Transverse colon (tissue), 4 donors: ENCODE measurements at regions of chr4 and their contacts with region 1.

Region 1: DNA sequence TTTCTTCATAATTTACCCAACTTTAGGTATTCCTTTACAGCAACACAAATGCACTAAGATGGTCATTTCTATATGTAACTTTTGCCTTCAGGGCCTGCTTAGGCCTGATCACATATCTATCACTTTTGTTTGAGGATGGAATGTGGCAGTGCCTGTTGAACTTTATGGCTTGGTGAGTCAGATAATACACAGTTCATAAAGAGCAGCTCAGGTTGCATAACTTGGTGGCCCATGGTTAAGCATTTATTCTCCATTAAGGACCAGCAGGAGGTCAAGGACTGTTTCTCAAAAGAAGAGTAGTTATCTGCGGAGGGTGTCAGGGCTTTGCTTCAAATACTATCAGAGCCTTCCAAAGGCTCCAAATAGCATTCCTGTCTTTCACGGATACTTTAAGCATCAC is 124.1 kb upstream of the PDHA2 start:
- DNase-seq: no peak
- H3K4me3 ChIP-seq: no peak overlapping the region
- H3K27ac ChIP-seq: no peak overlapping the region
- H3K4me1 ChIP-seq: no peaks in the 10 kb centered on the region
- H3K27me3 ChIP-seq: no peaks in the 10 kb centered on the region
- CTCF ChIP-seq: no peak
- EP300 ChIP-seq: no peak
- POLR2A ChIP-seq: no peak

Region 2: GRCh38 chr4:95728145-95728544 is 12.3 kb after region 1 on chr4:
- in situ Hi-C with region 1: no loop called
- intact Hi-C with region 1: loop called (anchors 1 kb)
- DNase-seq: no peak
- H3K4me3 ChIP-seq: no peak overlapping the region
- H3K27ac ChIP-seq: no peak overlapping the region
- H3K4me1 ChIP-seq: no peaks in the 10 kb centered on the region
- H3K27me3 ChIP-seq: no peaks in the 10 kb centered on the region
- CTCF ChIP-seq: no peak
- EP300 ChIP-seq: no peak
- POLR2A ChIP-seq: no peak

Region 3: DNA sequence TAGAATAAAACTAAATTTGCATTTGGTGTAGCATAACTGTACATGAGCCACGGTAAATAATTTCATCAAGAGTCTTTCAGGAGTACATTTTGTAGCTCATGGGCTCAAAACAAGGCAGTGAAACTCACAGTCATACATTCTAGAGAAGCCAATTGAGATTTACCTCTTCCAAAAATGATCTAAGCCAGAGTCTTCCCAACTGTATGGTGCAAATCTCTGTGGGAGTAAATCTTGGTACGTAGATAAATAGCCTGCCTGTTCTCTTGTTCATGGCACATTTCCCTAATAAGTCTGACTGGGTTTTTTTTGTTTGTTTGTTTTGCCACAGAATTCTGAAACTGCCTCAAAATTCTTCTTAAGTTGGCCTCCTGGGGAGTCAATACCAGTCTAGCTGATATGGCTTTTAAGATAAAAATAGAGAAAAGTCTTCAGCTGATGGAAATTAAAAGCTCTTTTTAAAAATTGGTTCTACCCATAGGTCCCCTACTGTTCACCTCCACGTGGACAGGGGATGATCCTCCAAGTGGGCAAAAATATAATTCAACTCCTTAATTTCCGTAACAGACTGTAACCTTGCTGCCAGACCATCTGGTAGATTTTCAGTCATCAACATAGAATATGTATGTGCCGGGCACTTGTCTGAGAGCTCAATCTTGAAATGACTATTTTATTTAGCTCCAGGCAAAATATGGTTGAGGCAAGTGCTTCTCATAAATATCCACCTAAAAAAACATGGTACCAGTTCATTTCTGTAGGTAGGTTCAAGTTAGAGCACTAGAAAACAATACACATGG is 489.5 kb after region 1 on chr4:
- in situ Hi-C with region 1: no loop called
- intact Hi-C with region 1: no loop called
- DNase-seq: no peak
- H3K4me3 ChIP-seq: no peak overlapping the region
- H3K27ac ChIP-seq: no peak overlapping the region
- H3K4me1 ChIP-seq: no peaks in the 10 kb centered on the region
- H3K27me3 ChIP-seq: no peaks in the 10 kb centered on the region
- CTCF ChIP-seq: no peak
- EP300 ChIP-seq: no peak
- POLR2A ChIP-seq: no peak

Region 4: GRCh38 chr4:96356591-96357370 is 641.0 kb after region 1 on chr4:
- in situ Hi-C with region 1: no loop called
- intact Hi-C with region 1: loop called (anchors 5 kb)
- DNase-seq: no peak
- H3K4me3 ChIP-seq: no peak overlapping the region
- H3K27ac ChIP-seq: no peak overlapping the region
- H3K4me1 ChIP-seq: peaks cover 0 to 8% (median 0%) of the 10 kb centered on the region in 4 donors
- H3K27me3 ChIP-seq: no peaks in the 10 kb centered on the region
- CTCF ChIP-seq: no peak
- EP300 ChIP-seq: no peak
- POLR2A ChIP-seq: no peak